ENCODE measurements at regions of chr10 and their contacts with region 1.

Region 1: DNA sequence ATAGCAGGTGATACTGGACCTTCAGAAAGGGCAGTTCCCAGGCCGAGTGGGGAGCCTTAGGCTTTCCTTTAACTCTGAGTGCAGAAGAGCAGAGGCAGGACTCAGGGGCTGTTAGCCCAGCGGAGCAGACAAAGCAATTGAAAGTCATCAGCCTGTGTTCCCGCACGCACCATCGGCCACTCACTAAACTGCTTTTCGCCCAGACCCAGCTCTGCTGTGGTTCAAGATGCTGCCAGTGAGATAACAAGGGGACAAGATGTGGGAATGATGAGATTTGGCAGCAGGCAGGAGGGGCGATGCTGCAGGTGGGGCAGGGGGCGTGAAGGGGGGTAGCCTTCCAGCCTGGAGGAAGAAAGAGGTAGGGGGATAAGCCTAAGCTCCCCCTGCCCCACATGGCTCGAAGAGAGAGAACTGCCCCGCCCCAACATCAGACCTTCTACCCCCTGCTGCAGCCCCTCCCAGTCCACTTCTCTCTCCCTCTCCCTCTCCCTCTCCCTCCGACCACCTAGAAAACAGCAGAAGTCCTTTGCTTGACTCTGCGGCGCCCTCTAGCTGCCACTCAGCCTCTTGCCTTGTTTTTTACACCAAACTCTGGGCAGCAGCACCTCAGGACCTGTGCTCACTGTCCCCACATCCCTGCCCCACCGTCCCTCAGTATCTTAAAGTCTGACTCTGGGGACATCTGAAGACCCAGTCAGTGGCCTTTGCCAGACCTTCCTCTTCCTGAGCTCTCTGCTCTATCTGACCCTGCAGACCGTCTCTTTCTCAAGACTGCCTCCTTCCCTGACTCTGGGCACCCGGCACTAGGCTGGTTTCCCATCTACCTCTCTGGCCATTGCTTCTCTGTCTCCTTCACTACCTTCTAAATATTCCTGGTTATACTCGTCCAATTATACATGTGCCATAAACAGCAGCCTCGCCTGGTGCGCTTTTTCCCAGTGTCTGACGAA is 110.5 kb downstream of the C10orf105 start:
- DNase-seq: no peak
- ATAC-seq: peak; percentile 82
- H3K4me3 ChIP-seq: no peak overlapping the region
- H3K27ac ChIP-seq: no peak overlapping the region
- H3K4me1 ChIP-seq: no peaks in the 10 kb centered on the region
- H3K27me3 ChIP-seq: no peaks in the 10 kb centered on the region; a peak in 2 of 4 replicates
- CTCF ChIP-seq: peak; percentile 75 to 84 (median 80)
- EP300 ChIP-seq: no peak
- POLR2A ChIP-seq: no peak
- RAD21 ChIP-seq: peak; percentile 64

Region 2: DNA sequence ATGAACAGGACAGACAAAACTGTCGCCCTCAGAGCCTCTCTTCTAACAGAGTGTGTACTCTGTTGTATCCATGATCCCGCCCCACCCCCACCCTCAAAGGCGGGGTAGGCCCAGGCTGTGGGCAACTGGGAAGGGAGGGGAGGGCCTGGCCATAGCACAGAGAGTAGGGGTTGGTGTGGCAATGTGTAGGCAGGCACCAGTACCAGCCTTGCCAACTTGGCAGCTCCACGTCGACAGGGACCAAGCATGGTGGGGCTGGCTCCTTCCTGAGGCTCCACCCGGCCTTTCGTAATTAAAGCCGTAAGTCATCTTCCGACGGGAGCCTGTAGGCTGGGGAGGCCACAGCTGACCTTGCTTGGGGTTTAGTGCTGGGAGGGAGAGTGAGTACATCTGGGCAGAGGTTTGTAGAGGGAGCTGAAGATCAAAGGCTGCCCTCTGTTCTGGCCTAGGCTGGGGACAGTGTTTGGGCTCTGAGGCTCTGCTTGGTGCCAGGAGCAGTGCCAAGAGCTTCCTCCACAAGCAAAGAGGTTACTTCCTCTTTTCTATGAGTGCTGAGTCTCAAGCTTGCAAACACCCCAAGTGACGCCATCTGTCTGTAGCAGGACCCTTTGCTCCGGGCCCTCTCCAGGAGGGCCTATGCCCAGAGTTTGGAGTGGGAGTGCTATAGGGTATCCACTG is 11.1 kb before region 1 on chr10:
- CTCF ChIA-PET with region 1: interaction called, 16 read pairs
- POLR2A ChIA-PET with region 1: no interaction called
- RAD21 ChIA-PET with region 1: no interaction called
- SMC1A ChIA-PET with region 1: no interaction called
- in situ Hi-C with region 1: no loop called
- intact Hi-C with region 1: no loop called
- DNase-seq: no peak
- ATAC-seq: peak; percentile 86
- H3K4me3 ChIP-seq: no peak overlapping the region
- H3K27ac ChIP-seq: no peak overlapping the region
- H3K4me1 ChIP-seq: no peaks in the 10 kb centered on the region
- H3K27me3 ChIP-seq: peaks cover 0 to under 1% of the 10 kb centered on the region in 2 experiments; a peak in 1 of 4 replicates
- CTCF ChIP-seq: no peak
- EP300 ChIP-seq: no peak
- POLR2A ChIP-seq: no peak
- RAD21 ChIP-seq: no peak

Region 3: GRCh38 chr10:71860243-71861029 is 251.3 kb after region 1 on chr10:
- CTCF ChIA-PET with region 1: no interaction called
- POLR2A ChIA-PET with region 1: no interaction called
- RAD21 ChIA-PET with region 1: no interaction called
- SMC1A ChIA-PET with region 1: no interaction called
- in situ Hi-C with region 1: no loop called
- intact Hi-C with region 1: no loop called
- DNase-seq: no peak
- ATAC-seq: peak; percentile 95
- H3K4me3 ChIP-seq: no peak overlapping the region
- H3K27ac ChIP-seq: peak overlapping the region; percentile 49
- H3K4me1 ChIP-seq: peaks cover 19% of the 10 kb centered on the region
- H3K27me3 ChIP-seq: no peaks in the 10 kb centered on the region
- CTCF ChIP-seq: no peak
- EP300 ChIP-seq: no peak
- POLR2A ChIP-seq: no peak
- RAD21 ChIP-seq: no peak

Measured in GM12878 (cell line).